Thyroid gland (tissue), 4 donors: ENCODE measurements at regions of chr4 and their contacts with region 1.

Region 1: GRCh38 chr4:176377780-176378179 is 58.0 kb downstream of the SPCS3 start:
- DNase-seq: no peak
- H3K4me3 ChIP-seq: no peak overlapping the region
- H3K27ac ChIP-seq: no peak overlapping the region
- H3K4me1 ChIP-seq: peaks cover 4 to 7% of the 10 kb centered on the region in 2 donors
- H3K27me3 ChIP-seq: no peaks in the 10 kb centered on the region
- CTCF ChIP-seq: peak in 4 of 6 experiments; percentile 32 to 86 (median 66)
- POLR2A ChIP-seq: no peak

Region 2: DNA sequence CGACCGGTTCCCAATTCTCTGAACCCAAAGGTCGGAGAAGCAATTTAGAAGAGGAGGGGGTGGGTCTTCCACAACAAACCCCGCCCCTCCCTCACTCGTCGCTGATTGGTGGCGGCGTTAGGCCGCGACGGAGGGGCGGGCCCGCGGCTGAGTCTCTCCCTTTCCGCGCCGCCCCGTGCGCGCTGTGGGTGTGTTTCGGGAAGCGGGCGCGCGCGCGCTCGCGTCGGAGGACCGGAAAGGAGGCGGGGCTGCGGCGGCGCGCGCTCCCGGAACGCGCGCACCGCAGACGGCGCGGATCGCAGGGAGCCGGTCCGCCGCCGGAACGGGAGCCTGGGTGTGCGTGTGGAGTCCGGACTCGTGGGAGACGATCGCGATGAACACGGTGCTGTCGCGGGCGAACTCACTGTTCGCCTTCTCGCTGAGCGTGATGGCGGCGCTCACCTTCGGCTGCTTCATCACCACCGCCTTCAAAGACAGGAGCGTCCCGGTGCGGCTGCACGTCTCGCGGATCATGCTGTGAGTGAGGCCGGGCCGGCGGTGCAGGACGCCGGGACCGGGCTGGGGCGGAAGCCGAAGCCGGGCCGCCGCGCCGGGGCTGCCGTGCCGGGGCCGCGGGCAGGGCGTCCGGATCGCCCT is 58.0 kb before region 1 on chr4 and contains the start of gene SPCS3:
- intact Hi-C with region 1: no loop called
- DNase-seq: peak; percentile 96 to 97
- H3K4me3 ChIP-seq: peak within 1 kb of the TSS; percentile 63 to 78 (median 64)
- H3K27ac ChIP-seq: peak within 1 kb of the TSS; percentile 89 to 93 (median 92)
- H3K4me1 ChIP-seq: peaks cover 15 to 18% of the 10 kb centered on the region in 2 donors
- H3K27me3 ChIP-seq: no peaks in the 10 kb centered on the region
- CTCF ChIP-seq: no peak
- POLR2A ChIP-seq: peak; percentile 72 to 93
- total RNA-seq, gene SPCS3: 129 to 149 (median 136) TPM

Region 3: GRCh38 chr4:177047070-177047850 is 669.5 kb after region 1 on chr4:
- intact Hi-C with region 1: loop called (anchors 5 kb)
- DNase-seq: peak; percentile 47 to 80
- H3K4me3 ChIP-seq: no peak overlapping the region
- H3K27ac ChIP-seq: no peak overlapping the region
- H3K4me1 ChIP-seq: no peaks in the 10 kb centered on the region
- H3K27me3 ChIP-seq: no peaks in the 10 kb centered on the region
- CTCF ChIP-seq: peak; percentile 64 to 90 (median 81)
- POLR2A ChIP-seq: no peak